ENCODE measurements at regions of chr18 and their contacts with region 1.

Region 1: DNA sequence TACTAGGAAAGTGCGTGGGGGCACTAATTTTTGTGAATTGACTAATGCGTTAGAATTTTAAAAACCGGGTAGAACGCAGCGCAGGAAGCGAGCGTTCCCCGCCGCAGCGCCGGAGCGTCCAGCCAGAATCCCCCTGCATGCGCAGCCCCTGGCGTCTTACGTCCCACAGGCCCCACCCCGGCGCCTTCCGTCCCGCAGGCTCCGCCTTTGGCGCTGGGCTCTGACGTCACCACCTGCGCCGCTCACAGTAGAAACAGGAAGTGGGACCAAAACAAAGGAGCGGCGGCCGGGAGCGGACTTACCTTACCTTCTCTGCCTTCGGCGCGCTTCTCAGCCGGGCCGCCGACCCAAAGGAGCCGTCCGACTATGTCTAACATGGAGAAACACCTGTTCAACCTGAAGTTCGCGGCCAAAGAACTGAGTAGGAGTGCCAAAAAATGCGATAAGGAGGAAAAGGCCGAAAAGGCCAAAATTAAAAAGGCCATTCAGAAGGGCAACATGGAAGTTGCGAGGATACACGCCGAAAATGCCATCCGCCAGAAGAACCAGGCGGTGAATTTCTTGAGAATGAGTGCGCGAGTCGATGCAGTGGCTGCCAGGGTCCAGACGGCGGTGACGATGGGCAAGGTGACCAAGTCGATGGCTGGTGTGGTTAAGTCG is at the start of gene CHMP1B:
- DNase-seq: peak; percentile 94 to 96 (median 95)
- H3K4me3 ChIP-seq: peak within 1 kb of the TSS; percentile 71 to 100
- H3K4me3 Mint-ChIP-seq: peak within 1 kb of the TSS; percentile 100
- H3K27ac ChIP-seq: peak within 1 kb of the TSS; percentile 98
- H3K27ac Mint-ChIP-seq: peak within 1 kb of the TSS; percentile 100
- H3K4me1 ChIP-seq: peaks cover 32% of the 10 kb centered on the region
- H3K4me1 Mint-ChIP-seq: peaks cover 16 to 57% (median 32%) of the 10 kb centered on the region in 4 donors
- H3K27me3 ChIP-seq: no peaks in the 10 kb centered on the region
- H3K27me3 Mint-ChIP-seq: no peaks in the 10 kb centered on the region
- total RNA-seq, gene CHMP1B: 44.3 to 46.9 TPM

Region 2: GRCh38 chr18:10525371-10526210 is 1325.7 kb before region 1 on chr18 and contains the start of gene NAPG:
- CTCF ChIA-PET with region 1: no interaction called
- POLR2A ChIA-PET with region 1: interaction called, 4 read pairs
- intact Hi-C with region 1: loop called (anchors 5 kb)
- DNase-seq: peak; percentile 88 to 94 (median 93)
- H3K4me3 ChIP-seq: peak within 1 kb of the TSS; percentile 89 to 91
- H3K4me3 Mint-ChIP-seq: peak within 1 kb of the TSS; percentile 95 to 99 (median 98)
- H3K27ac ChIP-seq: peak within 1 kb of the TSS; percentile 80
- H3K27ac Mint-ChIP-seq: peak within 1 kb of the TSS; percentile 92 to 99 (median 98)
- H3K4me1 ChIP-seq: peaks cover 51% of the 10 kb centered on the region
- H3K4me1 Mint-ChIP-seq: peaks cover 41 to 61% (median 51%) of the 10 kb centered on the region in 4 donors
- H3K27me3 ChIP-seq: no peaks in the 10 kb centered on the region
- H3K27me3 Mint-ChIP-seq: no peaks in the 10 kb centered on the region
- total RNA-seq, gene NAPG: 28.1 to 29.2 TPM

Region 3: DNA sequence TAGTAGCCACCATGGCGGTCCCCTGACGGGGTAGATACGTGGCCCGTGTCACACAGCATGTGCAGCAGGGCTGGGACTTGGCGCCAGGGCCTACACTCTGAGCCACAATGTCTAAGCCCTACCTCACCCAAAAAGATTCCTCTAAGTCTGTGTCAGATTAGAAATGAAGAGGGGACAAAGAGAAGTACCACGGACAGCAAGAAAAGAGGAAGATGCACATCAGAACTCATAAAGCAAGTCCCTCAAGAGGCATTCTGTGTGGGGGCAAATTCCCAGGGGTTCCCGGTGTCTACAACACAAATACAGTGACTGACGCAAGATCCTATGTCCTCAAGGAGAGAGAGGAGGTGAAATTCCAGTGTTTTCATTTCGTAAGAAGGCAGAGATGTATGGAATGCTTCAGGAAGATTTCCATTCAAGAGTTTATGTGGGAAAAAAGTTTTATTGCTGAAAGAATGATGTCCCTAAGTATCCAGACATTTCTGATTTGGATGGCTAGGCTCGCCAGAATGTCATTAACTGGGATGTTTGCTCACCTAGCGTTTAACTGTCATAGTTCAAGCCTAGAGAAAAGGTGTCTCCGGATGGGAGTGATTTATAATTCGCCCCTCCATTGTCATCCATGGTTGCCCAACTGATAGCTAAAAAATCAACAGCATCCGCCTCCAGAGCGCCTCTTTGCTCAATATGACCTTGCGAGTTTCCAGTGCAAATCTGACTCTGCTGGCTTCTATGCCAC is 75.7 kb before region 1 on chr18:
- CTCF ChIA-PET with region 1: no interaction called
- POLR2A ChIA-PET with region 1: no interaction called
- intact Hi-C with region 1: no loop called
- DNase-seq: no peak
- H3K4me3 ChIP-seq: no peak overlapping the region
- H3K4me3 Mint-ChIP-seq: no peak overlapping the region
- H3K27ac ChIP-seq: no peak overlapping the region
- H3K27ac Mint-ChIP-seq: no peak overlapping the region
- H3K4me1 ChIP-seq: no peaks in the 10 kb centered on the region
- H3K4me1 Mint-ChIP-seq: no peaks in the 10 kb centered on the region
- H3K27me3 ChIP-seq: peaks cover 2% of the 10 kb centered on the region
- H3K27me3 Mint-ChIP-seq: peaks cover 2 to 13% of the 10 kb centered on the region in 2 donors

Region 4: DNA sequence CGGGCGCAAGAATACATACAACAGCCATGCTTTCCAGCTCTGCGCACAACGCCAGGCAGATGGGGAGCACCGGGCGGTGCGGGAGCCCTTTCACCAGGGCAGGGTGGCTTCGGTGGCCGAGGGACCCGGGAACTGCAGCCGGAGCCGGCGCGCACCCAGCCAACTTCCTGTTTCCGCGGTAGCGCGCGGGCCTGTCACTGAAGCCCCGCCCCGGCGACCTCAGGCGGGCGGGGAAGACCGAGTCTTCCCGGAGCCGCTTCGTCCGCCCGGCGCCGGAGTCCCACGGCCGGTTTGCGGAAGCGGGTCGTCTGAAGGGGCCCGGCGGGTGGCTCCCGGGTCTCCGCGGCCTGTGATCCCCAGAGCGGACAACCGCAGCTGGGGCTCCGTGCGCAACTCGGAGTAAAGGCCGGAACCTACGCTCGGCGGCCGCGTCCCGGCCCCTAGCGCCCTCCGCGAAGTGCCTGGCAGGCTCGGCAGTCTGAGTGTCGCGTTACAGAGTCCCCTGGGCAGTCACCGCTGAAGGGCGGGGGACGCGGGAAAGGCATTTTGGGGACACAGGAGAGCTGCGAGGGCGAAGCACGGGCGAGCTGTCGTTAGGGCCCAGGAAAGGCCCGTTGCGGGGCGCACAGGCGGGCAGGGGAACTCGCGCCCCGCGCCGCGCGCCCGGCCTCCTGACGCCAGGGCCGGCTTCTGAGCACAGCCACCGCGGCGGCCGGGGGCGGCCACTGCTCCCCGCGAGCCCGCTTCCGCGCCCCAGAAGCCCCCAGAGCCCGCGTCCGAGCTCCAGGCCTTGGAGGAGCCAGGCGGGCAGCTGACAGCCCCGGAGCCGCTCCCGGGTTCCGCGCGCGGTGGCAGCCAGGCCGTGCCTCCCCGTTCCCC is 57.1 kb after region 1 on chr18 and contains the start of gene MPPE1:
- CTCF ChIA-PET with region 1: no interaction called
- POLR2A ChIA-PET with region 1: interaction called, 34 read pairs
- intact Hi-C with region 1: loop called (anchors 1 kb)
- DNase-seq: peak; percentile 82 to 87 (median 83)
- H3K4me3 ChIP-seq: peak within 1 kb of the TSS; percentile 86 to 93
- H3K4me3 Mint-ChIP-seq: peak within 1 kb of the TSS; percentile 94 to 96 (median 96)
- H3K27ac ChIP-seq: peak within 1 kb of the TSS; percentile 93
- H3K27ac Mint-ChIP-seq: peak within 1 kb of the TSS; percentile 89 to 98 (median 96)
- H3K4me1 ChIP-seq: peaks cover 20% of the 10 kb centered on the region
- H3K4me1 Mint-ChIP-seq: peaks cover 11 to 37% (median 21%) of the 10 kb centered on the region in 4 donors
- H3K27me3 ChIP-seq: no peaks in the 10 kb centered on the region
- H3K27me3 Mint-ChIP-seq: no peaks in the 10 kb centered on the region
- total RNA-seq, gene MPPE1: 75.3 to 79.7 TPM

Region 5: GRCh38 chr18:11980555-11981382 is 129.5 kb after region 1 on chr18:
- CTCF ChIA-PET with region 1: no interaction called
- POLR2A ChIA-PET with region 1: interaction called, 11 read pairs
- intact Hi-C with region 1: loop called (anchors 1 kb)
- DNase-seq: peak; percentile 94 to 95 (median 94)
- H3K4me3 ChIP-seq: peak overlapping the region; percentile 29 to 69
- H3K4me3 Mint-ChIP-seq: peak overlapping the region; percentile 81 to 93 (median 86)
- H3K27ac ChIP-seq: peak overlapping the region; percentile 9
- H3K27ac Mint-ChIP-seq: peak overlapping the region; percentile 25 to 79 (median 71)
- H3K4me1 ChIP-seq: peaks cover 12% of the 10 kb centered on the region
- H3K4me1 Mint-ChIP-seq: peaks cover 10 to 15% (median 12%) of the 10 kb centered on the region in 4 donors
- H3K27me3 ChIP-seq: no peaks in the 10 kb centered on the region
- H3K27me3 Mint-ChIP-seq: no peaks in the 10 kb centered on the region

Region 6: DNA sequence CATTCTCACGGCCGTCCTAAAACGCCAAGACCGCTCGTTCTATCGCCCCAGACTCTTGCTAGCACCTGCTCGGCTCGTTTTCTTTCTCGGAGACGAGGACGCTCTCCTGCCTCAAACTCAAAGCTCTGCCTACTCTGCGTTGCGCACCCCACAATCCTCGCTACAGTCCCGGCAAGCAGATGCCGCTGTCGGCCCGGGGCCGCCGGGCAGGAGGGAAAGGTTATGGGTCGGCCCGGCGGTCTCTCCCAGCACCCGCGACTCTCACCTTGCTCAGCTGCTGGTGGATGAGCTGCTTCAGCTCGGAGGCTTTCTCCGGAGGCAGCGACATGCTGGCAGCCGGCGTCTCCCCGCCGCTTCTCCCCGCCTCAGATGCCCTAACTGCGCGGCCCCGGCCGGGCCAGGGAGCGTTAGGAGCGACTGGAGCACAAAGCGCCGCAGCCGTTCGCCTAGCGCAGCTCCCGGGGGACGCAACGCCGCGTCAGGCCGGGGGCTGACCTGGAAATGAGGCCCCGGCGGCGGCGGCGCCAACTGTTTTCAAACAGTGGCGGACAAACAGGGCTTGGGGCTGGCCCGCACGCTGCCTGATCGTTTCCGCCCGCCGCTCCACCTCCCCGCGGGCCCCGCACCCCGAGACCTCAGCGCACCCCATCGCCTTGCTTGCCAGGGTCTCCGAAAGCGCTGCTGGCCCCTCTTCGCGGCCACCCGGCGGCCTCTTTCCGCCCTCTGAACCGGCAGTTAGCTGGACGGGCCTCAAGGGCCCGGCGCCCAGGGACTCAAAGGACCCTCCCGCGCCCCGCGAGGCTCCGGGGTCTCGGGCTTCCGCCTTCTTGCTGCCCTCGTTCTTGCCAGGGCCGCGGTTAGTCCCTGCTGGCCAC is 851.2 kb after region 1 on chr18 and contains the starts of genes CEP76 and PSMG2:
- CTCF ChIA-PET with region 1: no interaction called
- POLR2A ChIA-PET with region 1: no interaction called
- intact Hi-C with region 1: loop called (anchors 2 kb)
- DNase-seq: peak; percentile 84 to 90 (median 87)
- H3K4me3 ChIP-seq: peak within 1 kb of the TSS; percentile 82 to 99
- H3K4me3 Mint-ChIP-seq: peak within 1 kb of the TSS; percentile 87 to 100 (median 98)
- H3K27ac ChIP-seq: peak within 1 kb of the TSS; percentile 93
- H3K27ac Mint-ChIP-seq: peak within 1 kb of the TSS; percentile 89 to 100 (median 96)
- H3K4me1 ChIP-seq: peaks cover 46% of the 10 kb centered on the region
- H3K4me1 Mint-ChIP-seq: peaks cover 32 to 60% (median 48%) of the 10 kb centered on the region in 4 donors
- H3K27me3 ChIP-seq: no peaks in the 10 kb centered on the region
- H3K27me3 Mint-ChIP-seq: no peaks in the 10 kb centered on the region
- total RNA-seq, gene CEP76: 9.9 to 13.1 TPM
- total RNA-seq, gene PSMG2: 59.7 to 62.0 TPM

Region 7: DNA sequence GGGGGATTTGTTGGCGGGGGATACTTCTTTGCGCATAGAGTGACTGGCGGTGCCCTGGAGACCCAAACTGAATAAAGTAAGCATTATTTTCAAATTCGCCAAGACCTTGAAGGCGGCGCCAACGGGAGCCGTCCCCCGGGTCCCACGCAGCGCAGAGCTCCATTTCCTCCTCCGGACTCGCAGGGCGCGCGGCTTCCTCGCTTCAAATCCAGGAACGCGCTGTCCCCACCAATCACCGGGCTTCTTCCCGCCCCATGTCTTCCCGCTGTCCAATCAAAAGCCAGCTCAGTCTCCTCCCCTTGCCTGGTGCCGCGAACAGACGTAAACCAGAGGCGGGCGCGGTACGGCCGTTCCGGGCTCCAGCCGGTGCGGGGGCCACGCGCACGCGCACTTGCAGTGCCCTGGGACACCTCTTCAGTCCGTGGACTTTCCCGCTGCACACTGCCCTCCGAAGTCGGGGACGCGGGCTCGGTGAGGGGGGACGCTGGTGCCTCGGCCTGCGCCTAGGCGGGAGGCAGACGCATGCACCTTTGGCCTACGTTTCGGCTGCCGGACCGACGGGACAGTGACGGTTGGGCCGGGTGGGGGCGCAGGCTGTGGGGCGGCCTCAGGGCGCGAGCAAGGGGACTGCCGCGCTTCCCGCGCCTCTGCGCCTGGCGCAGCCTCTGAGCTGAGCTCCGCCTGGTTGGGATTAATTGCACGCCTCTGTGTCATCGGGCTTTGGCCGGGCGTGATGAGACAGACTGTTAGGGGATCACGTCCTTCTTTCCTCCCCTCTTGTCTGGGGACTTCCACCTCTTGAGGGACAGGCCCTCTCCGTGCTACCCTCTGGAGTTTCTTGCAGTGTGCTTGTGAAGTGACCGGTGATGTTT is 1139.9 kb after region 1 on chr18 and contains the start of gene CEP192:
- CTCF ChIA-PET with region 1: no interaction called
- POLR2A ChIA-PET with region 1: no interaction called
- intact Hi-C with region 1: loop called (anchors 5 kb)
- DNase-seq: peak; percentile 97 to 98 (median 98)
- H3K4me3 ChIP-seq: peak within 1 kb of the TSS; percentile 70 to 86
- H3K4me3 Mint-ChIP-seq: peak within 1 kb of the TSS; percentile 93 to 99 (median 98)
- H3K27ac ChIP-seq: peak within 1 kb of the TSS; percentile 93
- H3K27ac Mint-ChIP-seq: peak within 1 kb of the TSS; percentile 88 to 99 (median 97)
- H3K4me1 ChIP-seq: peaks cover 42% of the 10 kb centered on the region
- H3K4me1 Mint-ChIP-seq: peaks cover 0 to 29% (median 23%) of the 10 kb centered on the region in 4 donors
- H3K27me3 ChIP-seq: no peaks in the 10 kb centered on the region
- H3K27me3 Mint-ChIP-seq: no peaks in the 10 kb centered on the region
- total RNA-seq, gene CEP192: 42.5 to 45.5 TPM

Measured in CD4-positive, alpha-beta memory T cell (primary cell).